WTC11 (cell line): ENCODE measurements at regions of chr10 and their contacts with region 1.

Region 1: GRCh38 chr10:92592761-92593618 is at the start of gene KIF11:
- DNase-seq: peak; percentile 97
- ATAC-seq: peak; percentile 88
- H3K4me3 Mint-ChIP-seq: peak within 1 kb of the TSS; percentile 95
- H3K27ac Mint-ChIP-seq: peak within 1 kb of the TSS; percentile 100
- H3K4me1 Mint-ChIP-seq: peaks cover 52% of the 10 kb centered on the region
- H3K27me3 Mint-ChIP-seq: no peaks in the 10 kb centered on the region
- CTCF ChIP-seq: no peak
- total RNA-seq, gene KIF11: 46.0 to 55.7 TPM (median 47.5 TPM) in 3 replicates

Region 2: GRCh38 chr10:92573798-92574547 is 19.0 kb before region 1 on chr10 and contains the start of gene IDE:
- CTCF ChIA-PET with region 1: interaction called, 17 read pairs
- POLR2A ChIA-PET with region 1: interaction called, 15 read pairs
- DNase-seq: peak; percentile 94
- ATAC-seq: peak; percentile 86
- H3K4me3 Mint-ChIP-seq: peak within 1 kb of the TSS; percentile 67
- H3K27ac Mint-ChIP-seq: no peak within 1 kb of the TSS; the same call in 1 of the 2 replicates
- H3K4me1 Mint-ChIP-seq: peaks cover 29% of the 10 kb centered on the region
- H3K27me3 Mint-ChIP-seq: no peaks in the 10 kb centered on the region
- CTCF ChIP-seq: no peak
- total RNA-seq, gene IDE: 44.0 to 50.5 TPM (median 45.2 TPM) in 3 replicates